Activated CD4-positive, alpha-beta T cell treated with anti-CD3 and anti-CD28 coated beads for 36 hours (primary cell): ENCODE measurements at regions of chr11 and their contacts with region 1.

Region 1: DNA sequence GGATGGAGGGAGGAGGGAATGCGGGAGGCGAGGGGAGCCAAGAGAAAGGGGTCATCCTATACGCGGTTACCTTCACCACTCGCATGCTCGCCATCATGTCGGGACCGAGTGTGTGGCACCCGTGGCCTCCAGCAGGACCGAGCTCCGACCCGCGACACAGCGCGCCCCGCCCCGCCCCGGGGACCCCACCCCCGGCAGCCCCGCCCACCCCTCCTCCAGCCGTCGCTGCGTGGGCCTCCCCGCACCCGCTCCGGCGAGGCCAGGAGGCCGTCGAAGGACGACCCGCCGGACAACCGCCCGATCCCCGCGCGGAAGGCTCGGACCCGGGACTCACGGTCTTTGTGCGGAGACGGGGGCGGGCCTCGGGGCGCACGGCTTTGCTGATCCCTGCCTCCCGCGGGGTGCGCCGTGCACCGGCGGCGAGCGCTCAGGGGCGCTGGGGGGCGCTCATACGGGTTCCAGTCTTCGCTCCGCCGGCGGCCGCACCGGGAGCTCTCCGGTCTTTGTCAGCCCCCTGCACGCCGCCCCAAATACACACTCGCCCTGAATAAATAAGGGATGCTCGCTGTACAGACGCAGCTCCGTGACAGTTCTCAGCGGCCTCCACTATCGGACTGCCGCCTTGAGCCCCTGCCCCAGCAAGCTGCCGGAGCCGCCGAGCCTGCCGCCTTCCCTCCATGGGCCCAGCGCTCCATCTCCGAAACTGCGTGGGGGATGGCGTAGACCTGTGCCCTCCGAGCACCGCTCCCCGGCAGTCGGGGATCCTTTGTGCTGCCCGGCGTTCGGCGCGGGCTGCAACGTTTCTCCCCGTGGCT is at the start of gene UBE2L6:
- DNase-seq: peak; percentile 95
- ATAC-seq: peak; percentile 80
- H3K4me3 Mint-ChIP-seq: peak within 1 kb of the TSS; percentile 89
- H3K27ac Mint-ChIP-seq: peak within 1 kb of the TSS; percentile 98
- H3K4me1 Mint-ChIP-seq: peaks cover 29% of the 10 kb centered on the region
- H3K27me3 Mint-ChIP-seq: no peaks in the 10 kb centered on the region
- total RNA-seq, gene UBE2L6: 179 to 252 TPM

Region 2: DNA sequence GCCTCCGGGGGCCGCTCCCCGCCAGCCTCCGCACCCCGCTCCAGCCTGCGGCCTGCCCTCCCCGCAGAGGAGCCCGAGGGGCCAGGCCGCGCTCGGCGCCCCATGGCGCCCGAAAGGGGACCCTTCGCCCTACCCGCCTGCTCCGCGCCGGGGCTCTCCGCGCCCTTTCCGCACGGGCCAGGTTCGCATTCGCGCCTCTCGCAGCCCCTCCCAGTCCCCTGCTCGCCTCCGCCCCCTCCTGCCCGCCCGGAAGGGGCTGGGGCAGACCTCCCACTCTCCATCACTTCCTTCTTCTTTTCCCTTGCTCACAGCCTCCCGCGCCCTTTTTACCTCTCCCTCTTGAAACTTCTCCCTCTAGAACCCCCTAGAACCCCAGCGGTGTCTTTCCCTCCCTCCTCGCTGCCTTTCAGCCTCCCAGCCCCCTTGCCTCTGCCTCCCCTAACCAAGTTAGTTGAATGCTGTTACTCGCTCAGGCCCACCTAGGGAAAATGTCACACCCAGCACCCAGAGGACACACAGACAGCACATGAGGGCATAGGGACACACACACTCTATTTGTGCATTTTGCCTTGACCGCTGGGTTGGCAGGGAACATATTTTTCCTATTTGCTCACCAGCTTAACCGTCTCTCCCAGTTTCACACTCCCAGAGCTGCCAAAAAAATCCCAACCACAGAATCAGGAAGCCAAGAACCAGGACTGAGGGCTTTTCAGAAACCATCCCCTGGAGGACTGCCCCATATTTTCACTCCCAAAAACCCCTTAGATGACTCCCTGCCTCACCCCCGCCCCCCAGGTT is 140.6 kb before region 1 on chr11 and contains the start of gene SLC43A3:
- CTCF ChIA-PET with region 1: no interaction called
- POLR2A ChIA-PET with region 1: interaction called, 3 read pairs
- intact Hi-C with region 1: loop called (anchors 1 to 2 kb)
- DNase-seq: peak; percentile 90
- ATAC-seq: peak; percentile 67
- H3K4me3 Mint-ChIP-seq: peak within 1 kb of the TSS; percentile 98
- H3K27ac Mint-ChIP-seq: peak within 1 kb of the TSS; percentile 95
- H3K4me1 Mint-ChIP-seq: peaks cover 34% of the 10 kb centered on the region
- H3K27me3 Mint-ChIP-seq: no peaks in the 10 kb centered on the region
- total RNA-seq, gene SLC43A3: 268 to 333 TPM

Region 3: DNA sequence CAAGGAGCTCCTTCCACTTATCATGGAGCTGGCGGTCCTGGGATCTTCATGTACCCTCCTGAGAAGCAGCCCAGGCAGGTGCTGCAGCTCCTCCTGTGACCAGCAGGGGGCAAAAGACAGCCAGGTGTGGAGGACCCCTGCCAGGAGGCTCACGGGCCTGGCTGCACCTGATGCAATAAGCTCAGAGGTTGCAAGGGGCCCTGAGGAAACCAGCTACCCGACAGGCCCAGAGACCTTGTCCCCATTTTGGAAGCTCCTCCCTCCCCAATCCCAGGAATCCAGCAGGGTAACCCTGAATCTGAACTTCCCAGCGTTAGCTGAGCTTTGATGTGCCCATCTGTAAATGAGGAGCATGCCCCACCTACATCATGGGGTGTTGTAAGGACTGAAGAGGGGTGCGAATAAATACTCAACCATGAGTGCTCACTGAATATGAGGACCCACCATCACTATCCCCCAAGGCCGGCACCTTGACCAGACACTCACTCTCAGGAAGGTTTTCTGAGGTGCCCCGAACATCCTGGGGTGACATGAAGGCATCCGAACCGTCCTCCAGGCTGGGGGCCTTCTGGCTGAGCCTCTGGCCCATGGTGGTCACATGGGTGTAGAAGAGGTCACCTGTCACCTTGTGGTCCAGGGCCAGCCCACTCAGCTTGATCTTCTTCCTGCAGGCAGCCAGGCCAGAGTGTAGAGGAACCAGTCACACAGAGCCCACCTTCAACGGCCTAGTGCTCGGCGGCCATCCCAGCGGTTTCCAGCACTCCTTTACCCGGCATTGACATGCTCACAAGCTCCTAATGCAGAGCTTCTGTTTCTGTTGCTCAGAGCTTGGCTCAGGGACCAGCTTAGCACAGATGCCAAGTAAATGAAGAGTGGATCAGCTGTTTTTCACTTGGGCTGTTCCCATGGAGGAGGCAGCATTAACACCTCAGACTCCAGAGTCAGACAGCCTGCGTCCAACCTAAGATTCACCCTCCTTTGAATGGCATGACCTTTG is 73.9 kb before region 1 on chr11:
- CTCF ChIA-PET with region 1: interaction called, 12 read pairs
- POLR2A ChIA-PET with region 1: no interaction called
- intact Hi-C with region 1: no loop called
- DNase-seq: peak; percentile 88
- ATAC-seq: peak; percentile 81
- H3K4me3 Mint-ChIP-seq: no peak overlapping the region
- H3K27ac Mint-ChIP-seq: peak overlapping the region; percentile 89
- H3K4me1 Mint-ChIP-seq: peaks cover 9% of the 10 kb centered on the region
- H3K27me3 Mint-ChIP-seq: no peaks in the 10 kb centered on the region

Region 4: DNA sequence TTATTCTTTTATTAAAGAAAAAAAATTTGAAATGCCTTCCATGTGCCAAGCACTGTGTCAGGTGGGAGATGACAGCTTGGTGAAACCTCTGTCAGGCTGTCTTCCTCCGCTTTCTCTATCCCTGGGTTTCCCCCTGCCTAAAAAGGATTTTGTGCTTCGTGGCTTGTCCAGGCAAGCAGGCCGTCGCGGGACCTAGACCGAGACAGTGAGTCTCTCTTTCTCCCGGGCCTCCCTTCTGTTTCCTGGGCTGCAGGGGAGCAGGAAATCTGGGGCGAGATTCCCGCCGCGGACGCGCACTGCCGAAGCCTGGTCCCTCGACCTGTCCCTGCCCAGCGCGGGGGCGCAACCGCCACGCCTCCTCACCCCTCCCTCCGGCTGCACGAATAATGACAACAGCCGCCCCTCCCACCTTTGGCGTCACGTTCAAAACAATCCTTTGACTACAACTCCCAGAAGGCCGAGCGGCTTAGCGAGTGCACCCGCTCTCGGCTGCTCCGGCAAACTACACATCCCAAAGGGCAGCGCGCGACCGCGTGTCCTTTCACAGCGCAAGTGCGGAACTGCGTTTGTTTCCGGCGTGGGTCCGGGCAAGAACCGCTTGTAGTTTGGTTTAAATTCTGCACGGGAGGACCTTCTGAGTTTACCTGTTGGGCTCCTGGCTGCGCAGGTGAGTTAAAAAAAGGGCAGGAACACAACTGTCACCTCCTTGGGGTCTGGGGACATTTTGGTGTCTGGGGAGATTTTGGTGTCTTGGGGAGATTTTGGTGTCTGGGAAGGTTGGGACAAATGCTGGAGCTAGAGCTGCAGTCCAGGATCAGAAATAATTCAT is 89.7 kb after region 1 on chr11 and contains the start of gene CLP1:
- CTCF ChIA-PET with region 1: interaction called, 4 read pairs
- POLR2A ChIA-PET with region 1: no interaction called
- intact Hi-C with region 1: loop called in 1 of 2 experiments (anchors 1 kb)
- DNase-seq: peak; percentile 100
- ATAC-seq: peak; percentile 98
- H3K4me3 Mint-ChIP-seq: peak within 1 kb of the TSS; percentile 83
- H3K27ac Mint-ChIP-seq: peak within 1 kb of the TSS; percentile 95
- H3K4me1 Mint-ChIP-seq: peaks cover 29% of the 10 kb centered on the region
- H3K27me3 Mint-ChIP-seq: no peaks in the 10 kb centered on the region
- total RNA-seq, gene CLP1: 11.9 to 15.9 TPM

Region 5: GRCh38 chr11:57712256-57713150 is 144.8 kb after region 1 on chr11 and contains the start of gene TMX2:
- CTCF ChIA-PET with region 1: no interaction called
- POLR2A ChIA-PET with region 1: no interaction called
- intact Hi-C with region 1: loop called (anchors 1 to 5 kb)
- DNase-seq: peak; percentile 94
- ATAC-seq: peak; percentile 93
- H3K4me3 Mint-ChIP-seq: peak within 1 kb of the TSS; percentile 97
- H3K27ac Mint-ChIP-seq: peak within 1 kb of the TSS; percentile 97
- H3K4me1 Mint-ChIP-seq: peaks cover 50% of the 10 kb centered on the region
- H3K27me3 Mint-ChIP-seq: no peaks in the 10 kb centered on the region
- total RNA-seq, gene TMX2: 59.8 to 72.5 TPM

Region 6: GRCh38 chr11:57792060-57792541 is 224.4 kb after region 1 on chr11:
- CTCF ChIA-PET with region 1: no interaction called
- POLR2A ChIA-PET with region 1: no interaction called
- intact Hi-C with region 1: loop called (anchors 2 kb)
- DNase-seq: peak; percentile 89
- ATAC-seq: peak; percentile 96
- H3K4me3 Mint-ChIP-seq: peak overlapping the region; percentile 34
- H3K27ac Mint-ChIP-seq: peak overlapping the region; percentile 89
- H3K4me1 Mint-ChIP-seq: peaks cover 33% of the 10 kb centered on the region
- H3K27me3 Mint-ChIP-seq: no peaks in the 10 kb centered on the region

Region 7: DNA sequence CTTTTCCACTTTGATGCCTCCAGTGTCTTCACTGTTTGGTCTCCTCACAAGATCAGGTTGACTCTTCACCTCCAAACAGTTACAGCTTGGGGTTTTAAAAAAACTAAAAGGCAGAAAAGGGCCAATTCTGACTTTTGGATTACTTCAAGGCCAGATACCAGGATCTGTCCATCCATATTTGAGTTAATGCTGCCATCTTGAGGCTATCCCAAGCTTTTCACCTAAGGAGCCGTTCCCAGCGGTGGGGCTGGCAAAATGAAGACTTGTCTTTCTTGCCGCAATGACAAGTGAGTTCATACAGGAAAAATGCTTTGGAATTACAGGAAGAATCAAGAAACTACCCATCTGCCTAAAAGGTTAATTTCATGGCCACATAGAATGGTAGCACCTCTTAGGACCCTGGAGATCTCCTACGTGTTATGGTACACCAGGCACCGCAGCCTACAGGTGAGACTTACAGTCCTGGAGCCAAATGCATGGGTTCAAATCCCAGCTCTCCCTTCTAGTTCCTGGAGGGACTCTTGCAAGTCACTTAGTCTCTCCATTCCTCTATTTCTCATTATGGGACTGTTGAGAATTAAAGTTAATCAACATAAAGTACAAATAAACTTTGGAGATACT is 946.1 kb after region 1 on chr11:
- CTCF ChIA-PET with region 1: no interaction called
- POLR2A ChIA-PET with region 1: no interaction called
- intact Hi-C with region 1: loop called in 1 of 2 experiments (anchors 5 kb)
- DNase-seq: peak; percentile 41
- ATAC-seq: peak; percentile 44
- H3K4me3 Mint-ChIP-seq: no peak overlapping the region
- H3K27ac Mint-ChIP-seq: no peak overlapping the region
- H3K4me1 Mint-ChIP-seq: peaks cover 4% of the 10 kb centered on the region
- H3K27me3 Mint-ChIP-seq: no peaks in the 10 kb centered on the region